HepG2 (cell line): ENCODE measurements at regions of chr2 and their contacts with region 1.

Region 1: DNA sequence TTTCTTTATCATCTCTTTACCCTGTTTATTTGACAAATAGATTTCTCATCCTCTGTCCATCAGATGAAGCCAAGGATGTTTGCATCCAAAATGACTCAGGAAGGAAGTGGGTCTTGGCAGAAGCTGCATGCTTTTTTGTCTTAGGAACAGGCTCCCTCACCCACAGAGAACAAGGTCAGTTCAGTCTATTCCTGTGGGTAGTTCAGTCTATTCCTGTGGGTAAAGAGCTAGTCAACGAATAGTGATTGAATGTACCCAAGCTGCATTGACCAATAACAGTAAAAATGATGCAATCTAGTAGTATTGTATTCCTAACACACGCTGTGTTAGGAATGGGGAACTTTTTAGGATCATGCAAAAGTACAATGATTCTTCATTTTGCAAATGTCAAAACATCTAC is 290.8 kb upstream of the TANK start:
- DNase-seq: no peak
- ATAC-seq: no peak
- H3K4me3 ChIP-seq: no peak overlapping the region
- H3K27ac ChIP-seq: no peak overlapping the region
- H3K4me1 ChIP-seq: no peaks in the 10 kb centered on the region
- H3K27me3 ChIP-seq: no peaks in the 10 kb centered on the region
- CTCF ChIP-seq: no peak
- EP300 ChIP-seq: no peak
- POLR2A ChIP-seq: no peak
- RAD21 ChIP-seq: no peak

Region 2: GRCh38 chr2:159399811-159400415 is 1469.5 kb before region 1 on chr2:
- CTCF ChIA-PET with region 1: no interaction called
- POLR2A ChIA-PET with region 1: no interaction called
- in situ Hi-C with region 1: no loop called
- intact Hi-C with region 1: loop called (anchors 5 kb)
- DNase-seq: no peak
- ATAC-seq: peak; percentile 71
- H3K4me3 ChIP-seq: no peak overlapping the region
- H3K27ac ChIP-seq: peak overlapping the region; percentile 10
- H3K4me1 ChIP-seq: peaks cover 34% of the 10 kb centered on the region
- H3K27me3 ChIP-seq: no peaks in the 10 kb centered on the region
- CTCF ChIP-seq: no peak
- EP300 ChIP-seq: no peak
- POLR2A ChIP-seq: no peak
- RAD21 ChIP-seq: no peak